PC-9 (cell line): ENCODE measurements at regions of chr14 and their contacts with region 1.

Region 1: DNA sequence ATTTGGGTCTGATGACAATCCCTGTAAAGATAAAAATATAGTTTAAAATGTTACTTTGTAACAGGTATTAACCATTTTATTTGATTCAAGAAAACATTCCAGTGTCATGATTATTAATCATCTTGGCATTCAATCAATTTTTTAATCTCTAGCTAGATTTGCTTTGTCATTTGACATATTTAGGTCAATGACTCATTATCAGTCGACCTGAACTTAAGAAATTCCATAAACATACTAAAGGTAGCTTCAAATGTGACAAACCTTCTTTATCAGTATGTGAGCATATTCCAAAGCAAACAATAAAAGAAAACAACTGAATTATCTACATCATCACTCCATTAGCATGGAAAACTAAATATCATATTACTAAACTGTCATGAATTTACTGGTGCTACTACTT is 50.8 kb upstream of the CDKL1 start:
- DNase-seq: peak in 1 of 2 experiments; percentile 92
- H3K4me3 ChIP-seq: no peak overlapping the region
- H3K27ac ChIP-seq: peak overlapping the region; percentile 66
- H3K4me1 ChIP-seq: peaks cover 29% of the 10 kb centered on the region
- H3K27me3 ChIP-seq: no peaks in the 10 kb centered on the region
- CTCF ChIP-seq: no peak

Region 2: GRCh38 chr14:50342221-50343078 is 105.0 kb before region 1 on chr14:
- CTCF ChIA-PET with region 1: no interaction called
- POLR2A ChIA-PET with region 1: no interaction called
- intact Hi-C with region 1: loop called (anchors 10 kb)
- DNase-seq: peak in 1 of 2 experiments; percentile 21
- H3K4me3 ChIP-seq: no peak overlapping the region
- H3K27ac ChIP-seq: no peak overlapping the region
- H3K4me1 ChIP-seq: peaks cover 6% of the 10 kb centered on the region
- H3K27me3 ChIP-seq: no peaks in the 10 kb centered on the region
- CTCF ChIP-seq: no peak